Activated CD4-positive, alpha-beta memory T cell treated with anti-CD3 and anti-CD28 coated beads, Interleukin-2, amount 10 ng/mL, durations not matched to agents 7 days and 5 days (primary cell): ENCODE measurements at regions of chr1 and their contacts with region 1.

Region 1: DNA sequence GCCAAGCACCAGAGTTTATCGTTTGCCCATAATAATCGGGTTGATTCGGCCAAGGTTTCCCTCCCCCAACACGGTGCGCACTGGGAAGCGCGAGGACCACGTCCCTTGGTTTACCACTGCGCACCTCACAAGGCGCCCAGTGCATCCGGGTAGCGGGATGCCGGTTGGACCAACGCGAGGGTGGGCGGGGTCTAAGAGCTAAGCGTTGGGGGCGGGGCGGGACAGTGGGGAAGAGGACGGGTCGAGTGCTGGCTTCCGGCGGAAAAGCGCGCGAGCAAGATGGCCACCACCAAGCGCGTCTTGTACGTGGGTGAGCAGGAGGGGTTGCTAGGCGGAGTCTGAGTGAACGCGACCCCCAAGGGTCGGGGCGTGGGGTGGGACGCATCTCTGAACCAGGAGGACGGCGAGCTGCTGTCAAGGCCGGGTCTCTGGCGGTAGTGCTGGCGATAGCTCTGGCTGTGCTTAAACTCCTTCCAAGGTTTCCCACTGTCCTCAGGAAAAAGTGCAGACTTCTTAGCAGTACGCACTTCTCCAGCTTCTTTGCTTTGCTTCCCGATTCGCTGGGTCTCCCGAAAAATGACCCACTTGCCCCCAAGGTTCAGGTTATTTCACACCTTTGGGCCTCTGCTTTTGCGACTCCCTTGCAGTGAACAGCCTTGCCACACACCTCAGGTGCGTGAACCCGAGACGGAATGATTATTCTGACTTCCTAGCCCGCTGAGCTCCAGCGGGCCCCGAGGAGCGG is at the start of gene PPIE:
- DNase-seq: peak; percentile 96
- H3K4me3 Mint-ChIP-seq: peak within 1 kb of the TSS; percentile 94
- H3K27ac Mint-ChIP-seq: peak within 1 kb of the TSS; percentile 84
- H3K4me1 Mint-ChIP-seq: peaks cover 43% of the 10 kb centered on the region
- H3K27me3 Mint-ChIP-seq: peaks cover 2% of the 10 kb centered on the region
- total RNA-seq, gene PPIE: 52.3 to 57.4 TPM

Region 2: GRCh38 chr1:39720094-39720999 is 18.4 kb before region 1 on chr1:
- CTCF ChIA-PET with region 1: interaction called, 10 read pairs
- POLR2A ChIA-PET with region 1: interaction called, 3 read pairs
- DNase-seq: no peak
- H3K4me3 Mint-ChIP-seq: no peak overlapping the region
- H3K27ac Mint-ChIP-seq: no peak overlapping the region
- H3K4me1 Mint-ChIP-seq: no peaks in the 10 kb centered on the region
- H3K27me3 Mint-ChIP-seq: peaks cover 44% of the 10 kb centered on the region

Region 3: GRCh38 chr1:40014812-40015594 is 276.2 kb after region 1 on chr1:
- CTCF ChIA-PET with region 1: no interaction called
- POLR2A ChIA-PET with region 1: no interaction called
- DNase-seq: no peak
- H3K4me3 Mint-ChIP-seq: no peak overlapping the region
- H3K27ac Mint-ChIP-seq: no peak overlapping the region
- H3K4me1 Mint-ChIP-seq: peaks cover 14% of the 10 kb centered on the region
- H3K27me3 Mint-ChIP-seq: peaks cover 3% of the 10 kb centered on the region